Activated B cell treated with CpG ODN at 0.5 μM for 24 hours (primary cell): ENCODE measurements at regions of chr19 and their contacts with region 1.

Region 1: DNA sequence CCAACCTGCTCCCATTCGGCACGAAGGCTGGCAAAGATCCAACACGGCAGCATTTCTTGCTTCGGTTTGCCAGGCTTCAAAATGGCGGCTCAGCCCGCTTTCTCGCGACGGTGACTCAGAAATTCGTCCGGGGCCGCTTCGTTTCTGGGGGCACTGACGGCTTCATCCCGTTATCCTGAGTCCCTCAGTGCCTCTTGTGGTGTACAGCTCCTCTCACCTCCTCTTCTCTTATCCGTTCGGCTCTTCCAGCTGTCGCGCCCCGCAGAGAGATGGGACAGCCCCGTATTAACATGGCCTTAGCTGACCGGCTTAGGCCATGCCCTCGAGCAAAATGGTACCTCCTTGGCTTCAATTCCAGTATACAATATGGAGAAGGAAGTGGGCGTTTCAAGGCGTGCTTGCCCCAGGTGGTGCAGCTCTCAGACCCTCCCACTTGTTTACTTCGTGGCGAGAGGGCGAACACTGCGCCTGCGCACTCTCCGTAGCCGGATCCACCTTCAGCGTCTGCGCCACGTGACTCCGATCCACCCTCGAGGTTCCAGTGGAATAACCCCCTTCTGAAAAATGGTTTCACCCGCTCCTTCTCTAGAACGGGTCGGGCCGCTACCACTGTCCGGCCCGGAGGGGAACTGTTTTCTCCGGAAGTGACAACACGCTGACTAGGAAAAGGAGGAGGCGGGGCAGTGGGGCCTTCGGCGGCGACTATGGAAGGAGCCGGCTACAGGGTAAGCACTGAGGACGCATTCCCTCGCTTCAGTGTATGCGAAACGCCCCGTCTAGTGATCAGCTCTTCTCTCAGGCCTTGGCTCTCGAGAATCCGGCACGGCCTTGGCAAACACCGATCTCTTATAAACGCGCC is at the starts of genes AKT1S1 and TBC1D17:
- DNase-seq: peak; percentile 94
- ATAC-seq: peak; percentile 68
- H3K4me3 Mint-ChIP-seq: no peak within 1 kb of the TSS
- H3K27ac Mint-ChIP-seq: no peak within 1 kb of the TSS
- H3K4me1 Mint-ChIP-seq: peaks cover 25% of the 10 kb centered on the region
- H3K27me3 Mint-ChIP-seq: no peaks in the 10 kb centered on the region
- CTCF ChIP-seq: no peak
- total RNA-seq, gene AKT1S1: 21.3 and 28.7 TPM in 2 replicates
- total RNA-seq, gene TBC1D17: 51.1 and 57.0 TPM in 2 replicates

Region 2: GRCh38 chr19:48720613-48721296 is 1156.5 kb before region 1 on chr19:
- CTCF ChIA-PET with region 1: no interaction called
- POLR2A ChIA-PET with region 1: no interaction called
- intact Hi-C with region 1: loop called (anchors 2 kb)
- DNase-seq: peak; percentile 81
- ATAC-seq: peak; percentile 86
- H3K4me3 Mint-ChIP-seq: peak overlapping the region; percentile 95
- H3K27ac Mint-ChIP-seq: peak overlapping the region; percentile 92
- H3K4me1 Mint-ChIP-seq: peaks cover 24% of the 10 kb centered on the region
- H3K27me3 Mint-ChIP-seq: no peaks in the 10 kb centered on the region
- CTCF ChIP-seq: no peak

Region 3: GRCh38 chr19:49497047-49497788 is 380.0 kb before region 1 on chr19:
- CTCF ChIA-PET with region 1: no interaction called
- POLR2A ChIA-PET with region 1: interaction called, 5 read pairs
- intact Hi-C with region 1: loop called (anchors 1 kb)
- DNase-seq: peak; percentile 55
- ATAC-seq: peak; percentile 7
- H3K4me3 Mint-ChIP-seq: peak overlapping the region; percentile 93
- H3K27ac Mint-ChIP-seq: peak overlapping the region; percentile 97
- H3K4me1 Mint-ChIP-seq: peaks cover 68% of the 10 kb centered on the region
- H3K27me3 Mint-ChIP-seq: no peaks in the 10 kb centered on the region
- CTCF ChIP-seq: no peak

Region 4: GRCh38 chr19:49766007-49766937 is 111.0 kb before region 1 on chr19:
- CTCF ChIA-PET with region 1: no interaction called
- POLR2A ChIA-PET with region 1: interaction called, 15 read pairs
- intact Hi-C with region 1: loop called (anchors 1 kb)
- DNase-seq: peak; percentile 93
- ATAC-seq: peak; percentile 87
- H3K4me3 Mint-ChIP-seq: peak overlapping the region; percentile 88
- H3K27ac Mint-ChIP-seq: peak overlapping the region; percentile 96
- H3K4me1 Mint-ChIP-seq: peaks cover 33% of the 10 kb centered on the region
- H3K27me3 Mint-ChIP-seq: no peaks in the 10 kb centered on the region
- CTCF ChIP-seq: no peak

Region 5: GRCh38 chr19:49889687-49890348 is 12.6 kb after region 1 on chr19:
- CTCF ChIA-PET with region 1: interaction called, 4 read pairs
- POLR2A ChIA-PET with region 1: interaction called, 14 read pairs
- intact Hi-C with region 1: loop called (anchors 1 kb)
- DNase-seq: no peak
- ATAC-seq: peak; percentile 66
- H3K4me3 Mint-ChIP-seq: peak overlapping the region; percentile 82
- H3K27ac Mint-ChIP-seq: peak overlapping the region; percentile 7
- H3K4me1 Mint-ChIP-seq: peaks cover 41% of the 10 kb centered on the region
- H3K27me3 Mint-ChIP-seq: no peaks in the 10 kb centered on the region
- CTCF ChIP-seq: peak; percentile 39

Region 6: DNA sequence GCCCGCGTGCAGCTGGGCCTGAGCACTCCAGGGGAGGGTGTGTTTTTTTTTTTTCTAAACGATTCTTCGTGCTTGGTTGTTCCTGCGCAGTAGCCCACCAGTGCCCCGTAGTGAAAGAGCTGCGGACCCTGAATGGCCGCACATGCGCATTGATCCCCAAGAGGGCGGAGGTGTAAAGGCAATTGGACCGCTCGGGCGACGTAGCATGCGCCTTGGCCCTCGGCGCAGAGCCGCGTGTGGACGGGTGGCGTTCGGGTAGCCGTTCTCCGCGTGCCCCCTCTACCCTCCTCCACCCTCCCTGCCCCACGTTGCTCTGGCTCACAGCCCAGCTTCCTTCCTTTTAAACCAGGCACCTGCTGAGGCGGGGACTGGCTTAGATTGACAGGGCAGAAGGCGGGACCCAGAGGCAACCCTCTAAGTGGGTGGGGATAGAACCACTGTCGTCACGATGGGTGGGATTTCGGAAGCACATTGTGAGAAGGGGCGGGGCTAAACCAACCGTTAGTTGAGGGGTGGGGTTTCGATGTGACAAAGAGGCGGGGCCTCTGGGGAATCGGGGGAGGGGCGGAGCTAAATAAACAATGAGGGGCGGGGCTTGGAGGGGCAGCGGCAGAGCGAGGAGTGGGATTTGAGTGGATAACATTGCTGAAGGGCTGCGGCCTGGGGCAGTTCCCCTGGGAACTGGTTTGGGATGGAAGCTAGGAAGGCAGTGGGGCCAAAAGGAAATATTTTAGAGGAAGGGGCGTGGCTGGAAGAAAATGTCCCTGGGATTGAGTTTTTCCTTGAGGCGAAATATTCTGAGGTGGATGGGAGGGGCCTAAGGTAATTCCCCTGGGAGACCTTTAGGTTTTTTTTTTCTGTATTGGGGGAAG is 52.6 kb after region 1 on chr19:
- CTCF ChIA-PET with region 1: no interaction called
- POLR2A ChIA-PET with region 1: interaction called, 73 read pairs
- intact Hi-C with region 1: loop called (anchors 1 kb)
- DNase-seq: peak; percentile 84
- ATAC-seq: peak; percentile 83
- H3K4me3 Mint-ChIP-seq: peak overlapping the region; percentile 92
- H3K27ac Mint-ChIP-seq: peak overlapping the region; percentile 89
- H3K4me1 Mint-ChIP-seq: peaks cover 48% of the 10 kb centered on the region
- H3K27me3 Mint-ChIP-seq: no peaks in the 10 kb centered on the region
- CTCF ChIP-seq: no peak

Region 7: GRCh38 chr19:50376166-50377050 is 499.2 kb after region 1 on chr19 and contains the start of gene NR1H2:
- CTCF ChIA-PET with region 1: no interaction called
- POLR2A ChIA-PET with region 1: no interaction called
- intact Hi-C with region 1: loop called (anchors 2 kb)
- DNase-seq: peak; percentile 90
- ATAC-seq: peak; percentile 88
- H3K4me3 Mint-ChIP-seq: peak within 1 kb of the TSS; percentile 99
- H3K27ac Mint-ChIP-seq: peak within 1 kb of the TSS; percentile 99
- H3K4me1 Mint-ChIP-seq: peaks cover 14% of the 10 kb centered on the region
- H3K27me3 Mint-ChIP-seq: no peaks in the 10 kb centered on the region
- CTCF ChIP-seq: no peak
- total RNA-seq, gene NR1H2: 66.9 and 79.5 TPM in 2 replicates